Endothelial cell of umbilical vein (primary cell): ENCODE measurements at regions of chr5 and their contacts with region 1.

Region 1: GRCh38 chr5:142769741-142770631 is at the start of gene ARHGAP26:
- DNase-seq: peak; percentile 98
- H3K4me3 ChIP-seq: peak within 1 kb of the TSS; percentile 49 to 86 (median 74)
- H3K27ac ChIP-seq: peak within 1 kb of the TSS; percentile 33
- H3K4me1 ChIP-seq: peaks cover 10% of the 10 kb centered on the region
- H3K27me3 ChIP-seq: no peaks in the 10 kb centered on the region
- CTCF ChIP-seq: peak in 1 of 2 donors; percentile 61
- POLR2A ChIP-seq: peak; percentile 70
- total RNA-seq, gene ARHGAP26: 13.9 and 16.2 TPM in 2 replicates

Region 2: GRCh38 chr5:142388696-142389095 is 381.3 kb before region 1 on chr5:
- CTCF ChIA-PET with region 1: no interaction called
- POLR2A ChIA-PET with region 1: no interaction called
- dilution Hi-C with region 1: no loop called
- intact Hi-C with region 1: no loop called
- DNase-seq: no peak
- H3K4me3 ChIP-seq: no peak overlapping the region
- H3K27ac ChIP-seq: no peak overlapping the region
- H3K4me1 ChIP-seq: no peaks in the 10 kb centered on the region
- H3K27me3 ChIP-seq: no peaks in the 10 kb centered on the region
- CTCF ChIP-seq: no peak
- POLR2A ChIP-seq: no peak

Region 3: DNA sequence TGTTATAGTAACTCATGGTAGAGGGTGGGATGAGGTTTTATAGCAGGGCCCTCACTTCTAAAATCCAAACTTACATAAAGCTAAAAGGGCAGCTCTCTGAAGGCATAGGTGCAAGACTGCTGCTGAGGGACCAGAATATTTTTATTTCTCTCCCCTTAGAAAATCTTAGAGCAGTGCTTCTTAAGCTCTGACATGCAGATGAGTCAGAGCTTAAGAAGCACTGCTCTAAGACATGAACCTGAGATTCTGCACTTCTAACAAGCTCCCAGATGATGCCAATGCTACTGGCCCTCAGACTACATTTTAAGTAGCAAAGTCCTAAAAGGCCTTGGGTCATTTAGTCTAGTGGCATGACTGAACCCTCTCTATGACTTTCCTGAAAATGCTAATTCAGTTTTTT is 347.6 kb before region 1 on chr5:
- CTCF ChIA-PET with region 1: no interaction called
- POLR2A ChIA-PET with region 1: no interaction called
- dilution Hi-C with region 1: no loop called
- intact Hi-C with region 1: no loop called
- DNase-seq: peak; percentile 20
- H3K4me3 ChIP-seq: no peak overlapping the region
- H3K27ac ChIP-seq: no peak overlapping the region
- H3K4me1 ChIP-seq: peaks cover 49% of the 10 kb centered on the region
- H3K27me3 ChIP-seq: no peaks in the 10 kb centered on the region
- CTCF ChIP-seq: no peak
- POLR2A ChIP-seq: no peak

Region 4: GRCh38 chr5:142748568-142749249 is 21.3 kb before region 1 on chr5:
- CTCF ChIA-PET with region 1: interaction called, 31 read pairs
- POLR2A ChIA-PET with region 1: no interaction called
- dilution Hi-C with region 1: no loop called
- intact Hi-C with region 1: no loop called
- DNase-seq: peak; percentile 13
- H3K4me3 ChIP-seq: no peak overlapping the region
- H3K27ac ChIP-seq: peak overlapping the region; percentile 57
- H3K4me1 ChIP-seq: peaks cover 35% of the 10 kb centered on the region
- H3K27me3 ChIP-seq: no peaks in the 10 kb centered on the region
- CTCF ChIP-seq: peak; percentile 18 to 19
- POLR2A ChIP-seq: no peak

Region 5: DNA sequence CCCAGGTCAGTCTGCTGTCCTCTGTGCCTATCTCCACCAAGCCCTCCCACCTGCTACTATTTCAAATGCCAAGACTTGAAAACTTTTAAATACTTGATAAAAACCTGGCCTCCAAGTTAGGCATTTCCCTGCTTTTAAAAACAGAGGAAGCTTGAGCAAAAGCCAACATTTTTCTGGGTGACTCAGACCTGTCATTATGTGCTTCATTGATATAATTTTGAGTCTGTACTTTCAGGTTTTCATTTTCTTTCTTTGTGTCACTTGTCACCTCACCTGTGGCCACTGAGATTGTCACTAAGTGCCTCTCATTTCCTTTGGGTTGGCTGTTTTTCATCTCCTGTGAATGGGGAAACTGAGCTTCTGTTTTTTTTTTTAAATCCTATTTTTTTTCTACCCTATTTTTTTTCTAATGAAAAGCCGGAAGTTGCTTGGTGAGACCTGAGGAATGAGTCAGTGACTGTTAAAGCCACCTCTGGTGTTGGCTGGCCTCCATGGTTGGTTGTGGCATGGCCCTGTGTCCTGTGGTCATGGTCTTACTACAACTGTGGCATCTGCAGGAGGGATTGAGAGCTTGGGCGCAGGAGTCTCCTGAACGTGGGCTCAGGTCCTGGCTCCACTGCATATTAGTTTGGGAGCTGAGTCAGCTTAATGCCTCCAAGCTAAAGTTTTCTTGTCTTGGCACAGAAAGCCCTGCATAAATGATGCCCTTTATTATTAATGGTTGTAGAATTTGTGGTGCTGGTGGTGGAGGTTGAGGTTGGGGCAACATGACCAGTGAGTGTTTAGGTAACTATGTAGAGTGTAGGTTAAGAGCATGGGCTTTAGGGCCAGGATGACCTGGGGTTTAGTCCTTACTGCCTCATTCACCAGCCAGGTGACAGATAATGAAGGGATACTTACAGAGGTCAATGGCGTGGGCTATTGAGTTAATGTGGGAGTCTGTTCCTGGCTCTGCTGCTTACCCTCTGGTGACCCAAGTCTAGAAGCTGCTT is 57.1 kb after region 1 on chr5:
- CTCF ChIA-PET with region 1: interaction called, 6 read pairs
- POLR2A ChIA-PET with region 1: no interaction called
- dilution Hi-C with region 1: no loop called
- intact Hi-C with region 1: loop called (anchors 2 kb)
- DNase-seq: peak; percentile 91
- H3K4me3 ChIP-seq: peak overlapping the region in 1 of 3 experiments; percentile 20
- H3K27ac ChIP-seq: peak overlapping the region; percentile 83
- H3K4me1 ChIP-seq: peaks cover 72% of the 10 kb centered on the region
- H3K27me3 ChIP-seq: no peaks in the 10 kb centered on the region
- CTCF ChIP-seq: no peak
- POLR2A ChIP-seq: no peak

Region 6: DNA sequence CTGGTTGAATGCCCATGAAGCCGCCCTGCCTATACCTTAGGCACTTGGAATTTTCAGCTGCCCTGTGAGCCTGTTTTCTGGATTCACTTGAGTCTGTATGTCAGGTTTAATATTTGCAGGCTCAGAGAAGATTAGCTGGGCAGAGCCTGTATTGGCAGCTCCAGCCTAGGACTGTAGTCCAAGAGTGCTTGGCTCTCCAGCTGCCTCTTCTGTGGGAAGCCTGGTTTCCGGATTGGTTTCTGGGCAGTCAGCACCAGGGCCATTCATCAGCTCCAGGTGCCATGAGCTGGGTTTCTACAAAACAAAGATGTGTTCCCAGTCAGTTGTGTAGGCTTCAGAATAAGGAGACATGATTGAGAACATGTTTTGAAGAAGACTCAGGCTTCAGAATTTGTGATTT is 90.3 kb after region 1 on chr5:
- CTCF ChIA-PET with region 1: interaction called, 17 read pairs
- POLR2A ChIA-PET with region 1: no interaction called
- dilution Hi-C with region 1: no loop called
- intact Hi-C with region 1: no loop called
- DNase-seq: no peak
- H3K4me3 ChIP-seq: no peak overlapping the region
- H3K27ac ChIP-seq: no peak overlapping the region
- H3K4me1 ChIP-seq: peaks cover 8% of the 10 kb centered on the region
- H3K27me3 ChIP-seq: no peaks in the 10 kb centered on the region
- CTCF ChIP-seq: no peak
- POLR2A ChIP-seq: no peak

Region 7: GRCh38 chr5:142881076-142881783 is 111.2 kb after region 1 on chr5:
- CTCF ChIA-PET with region 1: interaction called, 22 read pairs
- POLR2A ChIA-PET with region 1: no interaction called
- dilution Hi-C with region 1: no loop called
- intact Hi-C with region 1: no loop called
- DNase-seq: no peak
- H3K4me3 ChIP-seq: no peak overlapping the region
- H3K27ac ChIP-seq: no peak overlapping the region
- H3K4me1 ChIP-seq: peaks cover 18% of the 10 kb centered on the region
- H3K27me3 ChIP-seq: no peaks in the 10 kb centered on the region
- CTCF ChIP-seq: no peak
- POLR2A ChIP-seq: no peak

Region 8: GRCh38 chr5:142915813-142916424 is 145.9 kb after region 1 on chr5:
- CTCF ChIA-PET with region 1: no interaction called
- POLR2A ChIA-PET with region 1: no interaction called
- dilution Hi-C with region 1: no loop called
- intact Hi-C with region 1: no loop called
- DNase-seq: no peak
- H3K4me3 ChIP-seq: no peak overlapping the region
- H3K27ac ChIP-seq: no peak overlapping the region
- H3K4me1 ChIP-seq: no peaks in the 10 kb centered on the region
- H3K27me3 ChIP-seq: no peaks in the 10 kb centered on the region
- CTCF ChIP-seq: peak; percentile 31 to 41
- POLR2A ChIP-seq: no peak